Activated T-helper 1 cell treated with anti-CD3 and anti-CD28 coated beads, Interleukin-12 subunit alpha, Interleukin-12 subunit beta, Interleukin-2, Interleukin-4 antibody, amounts not matched to agents 30 ng/mL and 10 ng/mL and 1 ng/mL, durations not matched to agents 14 hours and 24 hours and 36 hours (primary cell): ENCODE measurements at regions of chr9 and their contacts with region 1.

Region 1: DNA sequence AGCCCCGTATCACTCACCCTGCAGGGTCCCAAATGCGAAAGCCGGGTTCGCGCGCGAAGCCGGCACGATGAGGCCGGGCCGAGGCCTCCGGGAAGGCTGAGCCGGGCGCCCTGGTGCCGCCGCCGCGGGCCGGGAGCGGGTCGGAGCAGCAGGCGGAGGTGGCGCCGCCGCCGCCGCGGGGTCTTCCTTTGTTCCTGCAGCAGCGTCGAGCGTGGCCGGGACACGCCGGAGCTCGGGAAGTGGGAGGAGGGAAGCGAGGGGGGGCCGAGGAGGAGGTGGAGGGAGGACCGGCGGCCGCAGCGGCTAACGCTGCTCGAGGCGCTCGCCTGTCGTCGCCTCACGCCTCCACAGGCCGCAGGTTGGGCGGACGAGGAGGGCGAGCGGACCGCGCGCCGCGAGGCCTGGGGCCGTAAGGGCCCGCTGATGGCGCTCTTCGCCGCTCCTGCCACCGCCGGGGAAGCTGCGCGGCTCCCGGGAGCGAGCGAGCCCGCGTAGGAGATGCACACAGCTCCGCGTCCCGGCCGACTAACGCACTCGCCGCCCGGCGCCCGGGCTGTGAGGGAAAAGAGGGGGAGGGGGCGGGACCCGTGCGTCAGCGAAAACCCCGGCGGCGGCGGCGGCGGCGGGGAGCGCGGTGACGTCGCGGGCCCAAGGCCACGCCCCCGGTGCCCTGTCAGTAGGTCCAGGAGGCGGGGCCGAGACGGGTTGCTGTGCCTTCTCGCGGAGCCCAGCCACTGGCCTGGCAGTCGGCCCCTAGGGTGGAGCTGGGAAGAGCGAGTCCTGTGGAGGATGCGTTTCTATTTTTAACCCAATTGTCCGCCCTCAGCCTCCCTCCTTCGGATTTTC is at the start of gene ZFAND5:
- DNase-seq: peak; percentile 89
- H3K4me3 Mint-ChIP-seq: peak within 1 kb of the TSS; percentile 97
- H3K27ac Mint-ChIP-seq: peak within 1 kb of the TSS; percentile 97
- H3K4me1 Mint-ChIP-seq: peaks cover 42% of the 10 kb centered on the region
- H3K27me3 Mint-ChIP-seq: no peaks in the 10 kb centered on the region
- total RNA-seq, gene ZFAND5: 131 and 133 TPM in 2 replicates

Region 2: DNA sequence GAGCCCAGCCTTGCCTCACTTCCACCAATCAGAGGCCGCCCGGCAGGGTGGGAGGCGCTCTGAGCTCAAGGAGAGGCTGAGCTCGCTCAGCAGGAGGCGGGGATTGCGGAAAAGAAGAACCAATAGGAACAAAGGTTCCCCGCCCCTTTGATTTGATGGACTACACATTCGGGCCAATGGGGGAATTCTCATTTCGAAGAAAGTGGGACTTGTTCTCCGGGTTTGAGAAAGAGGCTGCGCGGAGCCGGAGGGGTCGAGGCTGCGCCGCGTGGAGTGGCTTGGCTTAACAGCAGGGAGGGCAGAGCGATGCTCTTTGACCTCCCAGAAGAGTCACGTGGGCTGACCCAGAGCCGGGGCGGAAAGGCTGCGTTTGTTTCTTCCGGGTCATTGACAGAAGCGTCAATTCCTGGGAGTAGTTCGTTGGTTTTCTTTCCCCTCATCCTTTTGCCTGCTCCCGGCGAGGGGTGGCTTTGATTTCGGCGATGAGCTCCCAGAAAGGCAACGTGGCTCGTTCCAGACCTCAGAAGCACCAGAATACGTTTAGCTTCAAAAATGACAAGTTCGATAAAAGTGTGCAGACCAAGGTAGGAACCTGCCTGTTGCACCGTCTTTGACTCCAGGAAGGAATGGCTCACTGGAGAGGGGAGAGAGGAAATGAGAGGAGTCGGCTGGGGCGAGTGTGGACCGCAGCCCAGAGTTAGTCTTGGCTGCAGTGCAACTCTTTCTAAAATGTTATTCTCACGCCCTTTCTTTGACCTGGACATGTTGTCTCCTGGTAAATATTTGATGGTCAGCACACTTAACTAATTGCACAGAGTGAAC is 453.4 kb before region 1 on chr9 and contains the start of gene C9orf85:
- intact Hi-C with region 1: loop called (anchors 1 kb)
- DNase-seq: peak; percentile 97
- H3K4me3 Mint-ChIP-seq: peak within 1 kb of the TSS; percentile 99
- H3K27ac Mint-ChIP-seq: peak within 1 kb of the TSS; percentile 96
- H3K4me1 Mint-ChIP-seq: peaks cover 64% of the 10 kb centered on the region
- H3K27me3 Mint-ChIP-seq: no peaks in the 10 kb centered on the region
- total RNA-seq, gene C9orf85: 9.3 and 9.8 TPM in 2 replicates

Region 3: GRCh38 chr9:72006501-72006900 is 358.4 kb before region 1 on chr9:
- intact Hi-C with region 1: no loop called
- DNase-seq: no peak
- H3K4me3 Mint-ChIP-seq: no peak overlapping the region
- H3K27ac Mint-ChIP-seq: no peak overlapping the region
- H3K4me1 Mint-ChIP-seq: no peaks in the 10 kb centered on the region
- H3K27me3 Mint-ChIP-seq: peaks cover 3% of the 10 kb centered on the region

Region 4: DNA sequence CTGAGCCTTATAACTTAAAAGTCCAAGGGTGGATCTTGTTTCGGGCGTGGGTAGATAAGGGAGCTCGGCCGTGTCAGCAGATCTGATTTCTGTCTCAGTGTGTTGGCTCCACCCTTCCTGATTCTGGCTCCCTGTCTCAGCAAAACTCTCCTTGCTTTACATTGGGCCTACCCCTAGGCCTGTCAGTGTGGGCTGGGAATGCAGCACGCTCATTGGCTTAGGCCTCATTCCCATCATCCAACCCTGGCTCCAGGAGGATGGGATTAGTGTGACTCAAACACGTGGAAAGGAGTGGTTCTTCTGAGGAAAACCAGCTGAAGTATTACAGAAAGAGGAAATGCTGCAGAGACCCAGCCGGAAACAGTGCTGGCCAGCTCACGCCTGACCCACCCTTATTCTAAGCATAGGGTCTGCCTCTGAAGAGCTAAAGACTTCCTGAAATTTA is 59.8 kb before region 1 on chr9:
- intact Hi-C with region 1: loop called (anchors 5 kb)
- DNase-seq: no peak
- H3K4me3 Mint-ChIP-seq: peak overlapping the region; percentile 60
- H3K27ac Mint-ChIP-seq: no peak overlapping the region
- H3K4me1 Mint-ChIP-seq: peaks cover 36% of the 10 kb centered on the region
- H3K27me3 Mint-ChIP-seq: peaks cover 4% of the 10 kb centered on the region

Region 5: DNA sequence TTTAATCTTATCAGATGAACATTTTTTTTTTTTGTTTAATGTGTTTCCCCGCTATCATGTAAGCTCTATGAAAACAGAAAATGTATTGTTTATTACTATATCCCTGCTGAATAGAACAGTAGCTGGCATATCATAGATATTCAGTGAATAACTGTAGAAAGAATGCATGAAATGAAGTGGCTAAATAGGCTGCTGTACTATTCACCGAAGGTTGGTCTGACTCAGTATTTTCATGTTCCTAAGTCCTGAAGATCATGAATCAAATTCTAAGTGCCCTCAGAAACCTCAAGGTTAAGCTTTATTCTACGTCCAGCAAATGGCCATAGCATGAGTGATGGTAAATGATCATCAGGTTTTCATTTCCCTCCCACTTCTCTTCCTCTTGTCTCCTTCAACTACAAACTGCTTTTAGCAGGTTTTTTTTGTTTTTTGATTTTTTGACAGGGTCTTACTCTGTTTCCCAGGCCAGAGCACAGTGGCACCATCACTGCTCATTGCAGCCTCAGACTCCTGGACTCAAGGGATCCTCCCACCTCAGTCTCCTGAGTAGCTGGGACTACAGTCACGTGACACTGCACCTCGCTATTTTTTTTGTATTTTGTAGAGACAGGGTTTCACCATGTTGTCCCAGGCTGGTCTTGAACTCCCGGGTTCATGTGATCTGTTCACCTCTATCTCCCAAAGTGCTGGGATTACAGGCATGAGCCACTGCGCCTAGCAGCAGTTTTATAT is 19.2 kb after region 1 on chr9:
- intact Hi-C with region 1: loop called (anchors 1 kb)
- DNase-seq: no peak
- H3K4me3 Mint-ChIP-seq: no peak overlapping the region
- H3K27ac Mint-ChIP-seq: no peak overlapping the region
- H3K4me1 Mint-ChIP-seq: peaks cover 9% of the 10 kb centered on the region
- H3K27me3 Mint-ChIP-seq: peaks cover 4% of the 10 kb centered on the region

Region 6: DNA sequence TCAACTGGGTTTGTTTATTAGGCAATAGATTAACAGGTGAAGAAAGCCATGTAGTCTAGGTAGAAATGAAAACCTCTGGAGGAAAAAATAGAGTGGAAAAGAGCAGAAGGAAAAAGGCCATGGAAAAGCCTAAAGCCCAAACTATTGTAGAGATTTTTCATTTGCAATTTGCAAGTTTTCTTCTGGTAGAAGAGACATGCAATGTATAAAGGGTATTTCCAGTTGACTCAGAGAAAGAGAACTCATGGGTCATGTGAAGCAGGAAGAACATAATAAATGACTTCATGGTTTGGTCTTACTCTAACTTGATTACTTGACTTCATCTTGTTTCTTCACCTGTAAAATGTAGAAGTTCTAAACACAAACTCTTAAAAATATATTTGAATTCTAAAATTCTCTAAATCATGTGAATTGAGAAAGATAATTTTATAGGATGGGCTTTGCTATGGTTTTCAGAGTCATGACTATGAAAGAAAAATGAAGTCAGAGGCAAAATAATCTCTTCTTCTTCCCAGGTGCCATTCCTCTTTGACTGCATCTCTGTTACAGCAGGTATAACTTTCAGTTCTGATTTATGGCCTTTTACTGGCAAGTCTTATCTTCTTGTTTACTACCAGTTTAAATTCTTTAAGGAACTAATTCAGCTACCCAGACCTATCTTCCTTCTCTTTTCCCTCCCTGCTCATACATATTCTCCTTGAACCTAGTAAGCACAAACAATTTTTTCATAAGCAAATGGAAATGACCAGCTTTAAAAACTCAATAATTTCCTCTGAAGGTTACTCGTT is 108.8 kb after region 1 on chr9:
- intact Hi-C with region 1: loop called (anchors 1 kb)
- DNase-seq: no peak
- H3K4me3 Mint-ChIP-seq: peak overlapping the region; percentile 60
- H3K27ac Mint-ChIP-seq: peak overlapping the region; percentile 90
- H3K4me1 Mint-ChIP-seq: peaks cover 64% of the 10 kb centered on the region
- H3K27me3 Mint-ChIP-seq: no peaks in the 10 kb centered on the region

Region 7: GRCh38 chr9:72540348-72540873 is 175.5 kb after region 1 on chr9:
- intact Hi-C with region 1: loop called (anchors 1 kb)
- DNase-seq: no peak
- H3K4me3 Mint-ChIP-seq: no peak overlapping the region
- H3K27ac Mint-ChIP-seq: no peak overlapping the region
- H3K4me1 Mint-ChIP-seq: peaks cover 36% of the 10 kb centered on the region
- H3K27me3 Mint-ChIP-seq: no peaks in the 10 kb centered on the region

Region 8: GRCh38 chr9:72635197-72635596 is 270.3 kb after region 1 on chr9:
- intact Hi-C with region 1: loop called (anchors 1 kb)
- DNase-seq: no peak
- H3K4me3 Mint-ChIP-seq: no peak overlapping the region
- H3K27ac Mint-ChIP-seq: no peak overlapping the region
- H3K4me1 Mint-ChIP-seq: peaks cover 15% of the 10 kb centered on the region
- H3K27me3 Mint-ChIP-seq: peaks cover 3% of the 10 kb centered on the region

Region 9: DNA sequence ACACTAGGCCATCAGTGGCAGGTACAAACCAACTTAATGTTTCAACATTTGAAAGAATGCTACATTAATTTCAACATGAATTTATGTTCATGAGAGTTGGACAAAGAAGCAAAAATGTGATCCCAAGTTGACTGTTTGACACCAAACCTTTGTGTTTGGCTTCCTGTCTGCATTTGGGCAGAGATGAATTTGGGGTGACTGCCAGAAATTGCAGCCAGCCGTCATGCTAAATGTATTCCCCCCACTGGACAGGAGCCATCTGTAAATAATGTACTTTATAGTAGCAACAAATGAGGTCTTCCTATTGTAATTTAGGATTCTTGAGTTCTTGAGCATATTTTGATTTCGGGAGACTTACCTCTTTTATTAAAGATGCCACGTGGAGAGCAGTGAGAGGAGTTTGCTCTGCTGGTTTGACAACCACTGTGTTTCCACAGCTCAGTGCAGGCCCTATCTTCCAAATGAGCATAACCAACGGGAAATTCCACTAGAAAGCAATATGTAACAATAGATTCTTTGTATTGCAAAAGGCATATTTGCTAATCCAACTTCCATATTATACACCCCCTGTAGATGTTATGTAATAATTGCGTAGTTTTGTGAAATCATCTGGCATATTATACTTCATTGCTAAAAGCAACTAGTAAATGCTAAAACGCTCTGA is 560.4 kb after region 1 on chr9:
- intact Hi-C with region 1: no loop called
- DNase-seq: no peak
- H3K4me3 Mint-ChIP-seq: no peak overlapping the region
- H3K27ac Mint-ChIP-seq: no peak overlapping the region
- H3K4me1 Mint-ChIP-seq: no peaks in the 10 kb centered on the region
- H3K27me3 Mint-ChIP-seq: no peaks in the 10 kb centered on the region